ENCODE measurements at regions of chr20 and their contacts with region 1.

Region 1: GRCh38 chr20:36808317-36809257 is 35.0 kb upstream of the DSN1 start:
- DNase-seq: peak; percentile 49 to 80 (median 72)
- ATAC-seq: peak; percentile 51
- H3K4me3 ChIP-seq: no peak overlapping the region
- H3K4me3 Mint-ChIP-seq: no peak overlapping the region
- H3K27ac ChIP-seq: no peak overlapping the region
- H3K27ac Mint-ChIP-seq: no peak overlapping the region
- H3K4me1 ChIP-seq: no peaks in the 10 kb centered on the region
- H3K4me1 Mint-ChIP-seq: peaks cover 2% of the 10 kb centered on the region
- H3K27me3 ChIP-seq: no peaks in the 10 kb centered on the region
- H3K27me3 Mint-ChIP-seq: no peaks in the 10 kb centered on the region
- CTCF ChIP-seq: peak; percentile 79

Region 2: DNA sequence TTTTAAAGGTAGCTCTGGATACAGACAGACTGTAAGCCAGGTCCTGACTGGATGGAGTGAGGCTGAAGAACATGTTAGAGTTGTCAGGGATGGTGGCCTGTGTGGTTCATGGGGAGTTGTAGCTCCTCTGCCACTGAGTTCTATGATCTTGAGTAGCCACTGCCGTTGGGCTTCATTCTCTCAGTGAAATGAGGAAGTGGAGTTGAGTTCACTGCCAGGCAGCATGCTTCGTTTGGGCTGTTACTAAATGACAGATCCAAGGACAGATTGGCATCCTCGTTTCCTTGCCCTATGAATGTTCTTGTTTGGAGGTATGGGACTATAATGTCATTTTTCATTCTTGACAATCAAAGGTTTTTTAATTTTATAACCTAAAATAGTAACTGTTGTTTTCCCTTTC is 891.5 kb before region 1 on chr20:
- CTCF ChIA-PET with region 1: no interaction called
- POLR2A ChIA-PET with region 1: no interaction called
- intact Hi-C with region 1: no loop called
- DNase-seq: no peak
- ATAC-seq: no peak
- H3K4me3 ChIP-seq: no peak overlapping the region
- H3K4me3 Mint-ChIP-seq: no peak overlapping the region
- H3K27ac ChIP-seq: no peak overlapping the region
- H3K27ac Mint-ChIP-seq: no peak overlapping the region
- H3K4me1 ChIP-seq: no peaks in the 10 kb centered on the region
- H3K4me1 Mint-ChIP-seq: no peaks in the 10 kb centered on the region
- H3K27me3 ChIP-seq: no peaks in the 10 kb centered on the region
- H3K27me3 Mint-ChIP-seq: no peaks in the 10 kb centered on the region
- CTCF ChIP-seq: no peak

Region 3: DNA sequence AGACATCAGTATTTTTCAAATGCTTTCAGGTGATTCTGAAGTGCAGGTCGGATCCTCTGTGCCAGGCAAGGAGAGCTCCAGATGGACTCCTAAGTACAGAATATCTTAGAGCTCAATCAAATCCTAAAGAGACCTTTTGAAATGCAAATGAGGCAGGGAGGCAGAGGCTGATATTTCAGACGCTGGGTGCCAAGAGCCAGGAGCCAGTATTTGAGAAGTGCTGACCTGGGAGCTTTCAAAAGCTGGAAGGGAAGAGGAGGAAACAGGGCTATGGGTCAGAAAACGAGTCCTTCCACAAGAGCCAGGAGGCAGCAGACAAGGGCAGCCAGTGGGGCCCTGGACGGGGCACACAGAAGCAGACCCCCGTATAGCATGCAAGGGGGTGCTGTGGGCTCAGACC is 11.1 kb after region 1 on chr20:
- CTCF ChIA-PET with region 1: interaction called, 14 read pairs
- POLR2A ChIA-PET with region 1: no interaction called
- intact Hi-C with region 1: no loop called
- DNase-seq: no peak
- ATAC-seq: no peak
- H3K4me3 ChIP-seq: no peak overlapping the region
- H3K4me3 Mint-ChIP-seq: no peak overlapping the region
- H3K27ac ChIP-seq: no peak overlapping the region
- H3K27ac Mint-ChIP-seq: no peak overlapping the region
- H3K4me1 ChIP-seq: no peaks in the 10 kb centered on the region
- H3K4me1 Mint-ChIP-seq: no peaks in the 10 kb centered on the region
- H3K27me3 ChIP-seq: no peaks in the 10 kb centered on the region
- H3K27me3 Mint-ChIP-seq: no peaks in the 10 kb centered on the region
- CTCF ChIP-seq: no peak

Region 4: DNA sequence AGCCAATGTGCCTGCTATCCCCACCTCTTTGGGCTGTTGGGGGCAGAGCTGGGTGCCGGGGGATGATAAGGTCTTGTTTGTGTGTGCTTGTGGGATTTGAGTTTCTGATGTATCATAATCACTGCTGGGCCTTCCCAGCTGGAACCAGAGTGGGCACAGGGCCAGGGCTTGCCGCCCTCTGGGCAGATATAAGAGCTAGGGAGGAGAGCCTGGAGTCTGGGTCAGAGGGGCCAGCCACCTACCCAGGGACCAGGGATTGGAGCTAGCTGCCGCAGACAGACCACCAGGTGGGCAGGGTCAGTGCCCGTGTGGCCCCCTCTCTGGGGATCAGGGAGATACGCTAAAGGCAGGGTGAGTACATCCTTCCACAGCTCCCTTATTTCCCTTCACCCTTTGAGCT is 64.3 kb after region 1 on chr20:
- CTCF ChIA-PET with region 1: no interaction called
- POLR2A ChIA-PET with region 1: no interaction called
- intact Hi-C with region 1: no loop called
- DNase-seq: no peak
- ATAC-seq: no peak
- H3K4me3 ChIP-seq: no peak overlapping the region
- H3K4me3 Mint-ChIP-seq: no peak overlapping the region
- H3K27ac ChIP-seq: no peak overlapping the region
- H3K27ac Mint-ChIP-seq: no peak overlapping the region
- H3K4me1 ChIP-seq: no peaks in the 10 kb centered on the region
- H3K4me1 Mint-ChIP-seq: no peaks in the 10 kb centered on the region
- H3K27me3 ChIP-seq: no peaks in the 10 kb centered on the region
- H3K27me3 Mint-ChIP-seq: no peaks in the 10 kb centered on the region
- CTCF ChIP-seq: no peak

Measured in CD8-positive, alpha-beta T cell (primary cell).